Caco-2 (cell line): ENCODE measurements at regions of chr3 and their contacts with region 1.

Region 1: DNA sequence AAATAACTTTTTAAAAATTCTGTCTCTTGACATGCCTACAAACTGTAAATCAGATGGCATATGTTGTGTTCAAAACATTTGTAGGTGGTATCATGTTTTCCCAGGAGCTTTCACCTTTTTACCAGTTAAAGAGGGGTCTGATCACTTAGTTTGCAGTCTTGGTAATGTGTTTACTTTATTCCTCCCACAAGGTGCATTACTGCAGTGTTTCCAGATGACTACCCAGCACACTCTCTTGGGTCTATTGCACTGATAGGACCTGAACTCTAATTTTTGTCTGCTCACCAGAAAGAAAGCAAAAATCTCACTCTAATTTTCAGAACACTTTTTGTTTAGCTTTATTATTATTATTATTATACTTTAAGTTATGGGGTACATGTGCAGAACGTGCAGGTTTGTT is 734.1 kb downstream of the GBE1 start:
- DNase-seq: no peak
- H3K4me3 ChIP-seq: no peak overlapping the region
- H3K4me3 Mint-ChIP-seq: no peak overlapping the region
- H3K27ac Mint-ChIP-seq: no peak overlapping the region
- H3K4me1 ChIP-seq: no peaks in the 10 kb centered on the region
- H3K4me1 Mint-ChIP-seq: no peaks in the 10 kb centered on the region
- H3K27me3 ChIP-seq: no peaks in the 10 kb centered on the region
- H3K27me3 Mint-ChIP-seq: no peaks in the 10 kb centered on the region
- CTCF ChIP-seq: no peak

Region 2: DNA sequence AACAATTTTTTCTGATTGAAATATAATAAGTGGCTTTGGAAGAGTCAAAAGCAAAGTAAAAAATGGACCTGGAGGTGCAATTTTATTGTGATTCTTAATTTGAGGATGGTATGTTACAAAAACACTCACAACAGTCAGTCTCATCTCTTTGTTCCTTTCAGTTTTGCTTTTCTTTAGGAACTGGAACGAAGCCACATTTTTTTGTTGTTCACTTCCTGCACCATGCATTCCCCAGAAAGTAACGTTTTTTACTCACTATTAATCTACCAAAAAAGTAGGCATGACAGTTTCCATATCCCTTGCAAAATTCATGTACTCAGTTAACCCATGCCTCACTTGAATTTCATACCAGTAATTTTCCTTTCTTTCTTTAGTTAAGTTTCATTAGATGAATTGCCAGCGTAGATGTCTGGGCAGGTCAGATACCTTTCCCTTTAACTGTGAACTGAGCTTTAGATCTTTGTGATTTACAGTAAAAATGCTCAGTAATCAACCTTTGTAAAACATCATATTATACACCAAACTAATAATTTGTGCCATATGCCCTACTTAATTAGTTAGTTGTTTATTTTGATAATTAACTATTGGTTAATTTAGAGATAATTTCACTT is 1643.8 kb before region 1 on chr3:
- CTCF ChIA-PET with region 1: no interaction called
- POLR2A ChIA-PET with region 1: no interaction called
- intact Hi-C with region 1: no loop called
- DNase-seq: no peak
- H3K4me3 ChIP-seq: no peak overlapping the region
- H3K4me3 Mint-ChIP-seq: no peak overlapping the region
- H3K27ac Mint-ChIP-seq: no peak overlapping the region
- H3K4me1 ChIP-seq: no peaks in the 10 kb centered on the region
- H3K4me1 Mint-ChIP-seq: no peaks in the 10 kb centered on the region
- H3K27me3 ChIP-seq: no peaks in the 10 kb centered on the region
- H3K27me3 Mint-ChIP-seq: peaks cover 4% of the 10 kb centered on the region
- CTCF ChIP-seq: no peak

Region 3: GRCh38 chr3:80969404-80969803 is 57.9 kb before region 1 on chr3:
- CTCF ChIA-PET with region 1: no interaction called
- POLR2A ChIA-PET with region 1: no interaction called
- intact Hi-C with region 1: loop called (anchors 10 kb)
- DNase-seq: no peak
- H3K4me3 ChIP-seq: no peak overlapping the region
- H3K4me3 Mint-ChIP-seq: no peak overlapping the region
- H3K27ac Mint-ChIP-seq: no peak overlapping the region
- H3K4me1 ChIP-seq: no peaks in the 10 kb centered on the region
- H3K4me1 Mint-ChIP-seq: no peaks in the 10 kb centered on the region
- H3K27me3 ChIP-seq: no peaks in the 10 kb centered on the region
- H3K27me3 Mint-ChIP-seq: no peaks in the 10 kb centered on the region
- CTCF ChIP-seq: no peak

Region 4: DNA sequence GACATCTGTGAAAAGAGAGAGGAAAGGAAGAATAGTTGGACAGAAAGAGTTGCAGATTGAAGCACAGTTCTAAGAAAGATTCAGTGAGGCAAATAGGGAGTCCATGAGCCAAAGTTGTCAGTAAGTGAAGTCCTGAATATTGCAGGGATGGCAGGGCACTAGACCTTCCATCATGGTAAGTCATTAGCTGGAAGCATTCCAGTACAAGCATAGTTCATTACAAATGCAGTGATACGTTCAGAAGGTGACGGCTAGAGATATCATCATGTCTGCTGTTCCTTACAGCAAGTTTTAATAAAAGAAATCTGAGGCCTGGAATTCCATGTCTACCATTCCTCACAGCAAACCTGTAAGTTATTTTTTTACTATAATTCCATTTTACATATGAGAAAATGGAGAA is 14.0 kb after region 1 on chr3:
- CTCF ChIA-PET with region 1: no interaction called
- POLR2A ChIA-PET with region 1: no interaction called
- intact Hi-C with region 1: no loop called
- DNase-seq: no peak
- H3K4me3 ChIP-seq: no peak overlapping the region
- H3K4me3 Mint-ChIP-seq: no peak overlapping the region
- H3K27ac Mint-ChIP-seq: no peak overlapping the region
- H3K4me1 ChIP-seq: peaks cover 3% of the 10 kb centered on the region; the same call in 1 of the 2 replicates
- H3K4me1 Mint-ChIP-seq: peaks cover 7% of the 10 kb centered on the region
- H3K27me3 ChIP-seq: no peaks in the 10 kb centered on the region
- H3K27me3 Mint-ChIP-seq: no peaks in the 10 kb centered on the region
- CTCF ChIP-seq: no peak

Region 5: GRCh38 chr3:81063896-81064295 is 36.6 kb after region 1 on chr3:
- CTCF ChIA-PET with region 1: no interaction called
- POLR2A ChIA-PET with region 1: no interaction called
- intact Hi-C with region 1: no loop called
- DNase-seq: no peak
- H3K4me3 ChIP-seq: no peak overlapping the region
- H3K4me3 Mint-ChIP-seq: no peak overlapping the region
- H3K27ac Mint-ChIP-seq: no peak overlapping the region
- H3K4me1 ChIP-seq: no peaks in the 10 kb centered on the region
- H3K4me1 Mint-ChIP-seq: no peaks in the 10 kb centered on the region
- H3K27me3 ChIP-seq: no peaks in the 10 kb centered on the region
- H3K27me3 Mint-ChIP-seq: no peaks in the 10 kb centered on the region
- CTCF ChIP-seq: no peak